ENCODE measurements at regions of chr18 and their contacts with region 1.

Region 1: GRCh38 chr18:11908182-11909060 is at the start of gene MPPE1:
- DNase-seq: peak; percentile 82
- H3K4me3 Mint-ChIP-seq: peak within 1 kb of the TSS; percentile 92
- H3K27ac Mint-ChIP-seq: peak within 1 kb of the TSS; percentile 89
- H3K4me1 Mint-ChIP-seq: no peaks in the 10 kb centered on the region
- H3K27me3 Mint-ChIP-seq: no peaks in the 10 kb centered on the region
- CTCF ChIP-seq: no peak
- total RNA-seq, gene MPPE1: 15.7 and 24.7 TPM in 2 replicates

Region 2: DNA sequence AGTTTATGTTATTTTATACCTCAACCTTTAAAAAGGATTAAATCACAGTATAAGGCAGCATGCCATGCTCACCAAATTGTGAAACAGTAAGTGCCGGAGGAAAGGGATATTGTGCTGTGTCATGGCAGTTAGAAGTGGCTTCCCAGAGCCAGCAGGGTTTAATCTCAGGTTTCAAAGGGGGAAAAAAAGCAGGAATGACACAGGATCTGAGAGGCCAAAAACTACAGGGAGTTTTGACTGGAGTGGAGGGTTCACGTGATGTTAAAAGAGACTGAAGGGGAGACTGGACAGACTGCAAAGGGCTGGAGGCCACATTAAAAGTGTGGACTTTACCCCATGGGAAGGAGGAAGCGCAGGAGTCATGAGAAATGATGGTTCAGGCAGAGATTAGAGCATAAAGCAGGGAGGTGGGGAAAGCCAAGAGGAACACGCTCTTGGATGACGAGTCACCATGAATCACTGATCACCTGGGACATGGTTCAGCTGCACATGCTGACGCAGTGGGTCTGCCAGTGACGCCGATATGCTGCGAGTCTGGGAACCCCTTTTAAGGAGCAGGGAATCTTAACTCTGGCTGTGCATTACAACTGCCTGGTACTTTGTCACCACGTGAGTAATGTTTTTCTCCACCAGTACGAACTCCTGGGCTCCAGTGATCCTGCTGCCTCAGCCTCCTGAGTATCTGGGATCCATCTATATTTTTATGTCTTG is 51.1 kb before region 1 on chr18:
- CTCF ChIA-PET with region 1: no interaction called
- POLR2A ChIA-PET with region 1: interaction called, 4 read pairs
- intact Hi-C with region 1: loop called (anchors 2 kb)
- DNase-seq: peak; percentile 98
- H3K4me3 Mint-ChIP-seq: peak overlapping the region; percentile 67
- H3K27ac Mint-ChIP-seq: peak overlapping the region; percentile 98
- H3K4me1 Mint-ChIP-seq: peaks cover 44% of the 10 kb centered on the region
- H3K27me3 Mint-ChIP-seq: no peaks in the 10 kb centered on the region
- CTCF ChIP-seq: no peak

Measured in MCF 10A (cell line).